Activated CD4-positive, alpha-beta memory T cell treated with anti-CD3 and anti-CD28 coated beads, Interleukin-2, amount 10 ng/mL, durations not matched to agents 7 days and 5 days (primary cell): ENCODE measurements at regions of chr17 and their contacts with region 1.

Region 1: GRCh38 chr17:64081802-64082799 is 47.8 kb downstream of the ERN1 start:
- DNase-seq: peak; percentile 84
- H3K4me3 Mint-ChIP-seq: peak overlapping the region; percentile 54
- H3K27ac Mint-ChIP-seq: no peak overlapping the region
- H3K4me1 Mint-ChIP-seq: peaks cover 31% of the 10 kb centered on the region
- H3K27me3 Mint-ChIP-seq: no peaks in the 10 kb centered on the region

Region 2: DNA sequence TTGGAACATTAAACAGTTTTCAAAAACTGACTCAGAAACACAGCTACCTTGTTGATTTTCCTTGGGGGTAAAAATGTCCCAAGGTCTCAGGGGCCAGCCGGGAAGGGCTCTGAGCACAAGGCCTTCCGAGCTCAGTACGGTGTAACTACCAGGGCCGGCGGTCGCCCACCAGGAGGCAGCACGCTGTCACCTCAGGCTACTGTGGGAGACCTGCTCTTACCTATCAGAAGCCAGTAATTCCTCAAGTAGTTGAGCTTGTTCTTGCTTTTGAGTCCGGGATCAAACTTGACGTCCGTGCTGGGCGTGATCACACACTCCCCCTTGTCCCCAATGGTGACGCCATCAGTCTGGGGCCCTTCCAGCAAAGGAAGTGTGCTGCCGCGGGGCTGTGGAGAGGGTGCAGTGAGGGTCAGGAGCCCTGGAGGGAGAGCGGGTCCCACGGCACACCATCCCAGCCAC is 18.3 kb before region 1 on chr17:
- CTCF ChIA-PET with region 1: interaction called, 6 read pairs
- POLR2A ChIA-PET with region 1: interaction called, 85 read pairs
- DNase-seq: peak; percentile 66
- H3K4me3 Mint-ChIP-seq: peak overlapping the region; percentile 89
- H3K27ac Mint-ChIP-seq: peak overlapping the region; percentile 96
- H3K4me1 Mint-ChIP-seq: peaks cover 99% of the 10 kb centered on the region
- H3K27me3 Mint-ChIP-seq: no peaks in the 10 kb centered on the region

Region 3: GRCh38 chr17:64106918-64107317 is 24.8 kb after region 1 on chr17:
- CTCF ChIA-PET with region 1: interaction called, 3 read pairs
- POLR2A ChIA-PET with region 1: interaction called, 13 read pairs
- DNase-seq: no peak
- H3K4me3 Mint-ChIP-seq: no peak overlapping the region
- H3K27ac Mint-ChIP-seq: peak overlapping the region; percentile 71
- H3K4me1 Mint-ChIP-seq: peaks cover 80% of the 10 kb centered on the region
- H3K27me3 Mint-ChIP-seq: no peaks in the 10 kb centered on the region

Region 4: DNA sequence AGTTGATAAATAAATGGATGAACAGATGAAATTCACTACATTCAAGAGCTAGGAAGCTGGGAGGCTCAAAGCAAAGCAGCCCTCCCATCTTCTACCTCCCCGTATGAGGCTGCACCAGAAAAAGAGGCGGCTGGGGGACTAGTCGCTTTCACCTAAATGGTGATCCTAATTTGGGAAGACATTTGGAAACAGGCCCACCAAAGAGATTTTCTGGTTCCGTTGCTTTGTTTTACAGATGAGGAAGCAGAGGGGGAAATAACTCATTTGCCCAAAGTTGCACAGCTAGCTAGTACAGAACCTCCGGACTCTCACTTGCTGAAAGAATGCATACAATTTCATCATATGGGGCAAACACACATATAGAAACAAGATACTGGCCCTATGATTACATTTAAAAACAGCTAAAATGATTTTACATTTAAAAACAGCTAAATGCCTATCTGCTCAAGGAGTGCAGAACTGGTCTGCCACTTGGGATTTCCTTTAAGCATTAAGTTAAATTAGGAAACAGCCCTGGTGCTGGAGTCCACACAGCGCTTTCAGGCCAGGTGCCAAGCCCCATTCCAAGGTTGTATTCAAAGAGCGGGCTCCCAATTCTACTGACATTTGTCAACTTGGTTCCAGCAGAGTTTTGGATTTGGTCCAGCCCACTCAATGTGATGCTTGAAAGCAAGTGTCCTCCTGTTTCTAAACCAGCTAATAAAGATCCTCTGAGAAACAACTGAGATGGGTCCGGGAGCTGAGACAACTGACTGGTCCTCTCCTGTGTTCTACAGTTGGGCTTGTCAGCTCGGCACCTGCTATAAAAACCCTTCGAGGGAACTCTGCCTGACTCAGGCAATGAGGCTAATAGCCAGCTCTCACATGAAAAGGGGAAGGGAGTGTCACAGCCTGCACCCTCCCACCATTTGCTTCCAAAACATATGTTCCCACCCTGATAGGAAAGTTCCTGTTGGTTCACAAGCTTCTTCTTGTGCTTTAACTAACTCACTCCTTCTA is 36.2 kb after region 1 on chr17:
- CTCF ChIA-PET with region 1: interaction called, 3 read pairs
- POLR2A ChIA-PET with region 1: interaction called, 10 read pairs
- DNase-seq: no peak
- H3K4me3 Mint-ChIP-seq: no peak overlapping the region
- H3K27ac Mint-ChIP-seq: no peak overlapping the region
- H3K4me1 Mint-ChIP-seq: peaks cover 80% of the 10 kb centered on the region
- H3K27me3 Mint-ChIP-seq: no peaks in the 10 kb centered on the region

Region 5: GRCh38 chr17:64155751-64156544 is 73.8 kb after region 1 on chr17:
- CTCF ChIA-PET with region 1: no interaction called
- POLR2A ChIA-PET with region 1: no interaction called
- DNase-seq: no peak
- H3K4me3 Mint-ChIP-seq: no peak overlapping the region
- H3K27ac Mint-ChIP-seq: no peak overlapping the region
- H3K4me1 Mint-ChIP-seq: no peaks in the 10 kb centered on the region
- H3K27me3 Mint-ChIP-seq: no peaks in the 10 kb centered on the region

Region 6: GRCh38 chr17:64230795-64231408 is 148.8 kb after region 1 on chr17:
- CTCF ChIA-PET with region 1: no interaction called
- POLR2A ChIA-PET with region 1: no interaction called
- DNase-seq: no peak
- H3K4me3 Mint-ChIP-seq: no peak overlapping the region
- H3K27ac Mint-ChIP-seq: no peak overlapping the region
- H3K4me1 Mint-ChIP-seq: no peaks in the 10 kb centered on the region
- H3K27me3 Mint-ChIP-seq: no peaks in the 10 kb centered on the region

Region 7: DNA sequence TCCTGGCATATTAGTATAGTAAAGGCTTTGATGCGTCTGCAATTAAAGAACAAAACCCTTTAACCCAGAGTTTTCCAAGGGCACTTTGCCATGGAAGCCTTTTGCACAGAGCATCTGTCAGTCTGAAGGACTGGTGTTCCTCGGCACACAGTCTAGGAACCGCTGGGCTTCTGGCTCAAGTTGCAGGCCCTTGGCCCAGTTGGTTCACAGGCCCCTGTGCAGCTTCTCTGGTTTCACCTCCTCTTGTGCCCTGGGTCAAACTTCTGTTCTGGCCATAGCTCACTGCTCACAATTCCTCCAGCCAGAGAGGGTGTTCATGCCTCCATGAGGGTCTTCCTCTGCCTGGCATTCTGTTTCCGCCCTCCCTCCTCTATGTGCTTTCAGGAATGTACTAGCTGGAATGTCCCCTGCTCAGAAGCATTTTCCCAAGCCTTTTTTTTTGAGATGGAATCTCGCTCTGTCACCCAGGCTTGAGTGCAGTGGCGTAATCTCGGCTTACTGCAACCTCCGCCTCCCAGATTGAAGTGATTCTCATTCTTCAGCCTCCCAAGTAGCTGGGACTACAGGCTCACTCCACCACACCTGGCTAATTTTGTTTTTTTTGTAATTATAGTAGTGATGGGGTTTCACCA is 215.5 kb after region 1 on chr17:
- CTCF ChIA-PET with region 1: no interaction called
- POLR2A ChIA-PET with region 1: no interaction called
- DNase-seq: no peak
- H3K4me3 Mint-ChIP-seq: no peak overlapping the region
- H3K27ac Mint-ChIP-seq: no peak overlapping the region
- H3K4me1 Mint-ChIP-seq: no peaks in the 10 kb centered on the region
- H3K27me3 Mint-ChIP-seq: no peaks in the 10 kb centered on the region